ENCODE measurements at regions of chr11 and their contacts with region 1.

Region 1: DNA sequence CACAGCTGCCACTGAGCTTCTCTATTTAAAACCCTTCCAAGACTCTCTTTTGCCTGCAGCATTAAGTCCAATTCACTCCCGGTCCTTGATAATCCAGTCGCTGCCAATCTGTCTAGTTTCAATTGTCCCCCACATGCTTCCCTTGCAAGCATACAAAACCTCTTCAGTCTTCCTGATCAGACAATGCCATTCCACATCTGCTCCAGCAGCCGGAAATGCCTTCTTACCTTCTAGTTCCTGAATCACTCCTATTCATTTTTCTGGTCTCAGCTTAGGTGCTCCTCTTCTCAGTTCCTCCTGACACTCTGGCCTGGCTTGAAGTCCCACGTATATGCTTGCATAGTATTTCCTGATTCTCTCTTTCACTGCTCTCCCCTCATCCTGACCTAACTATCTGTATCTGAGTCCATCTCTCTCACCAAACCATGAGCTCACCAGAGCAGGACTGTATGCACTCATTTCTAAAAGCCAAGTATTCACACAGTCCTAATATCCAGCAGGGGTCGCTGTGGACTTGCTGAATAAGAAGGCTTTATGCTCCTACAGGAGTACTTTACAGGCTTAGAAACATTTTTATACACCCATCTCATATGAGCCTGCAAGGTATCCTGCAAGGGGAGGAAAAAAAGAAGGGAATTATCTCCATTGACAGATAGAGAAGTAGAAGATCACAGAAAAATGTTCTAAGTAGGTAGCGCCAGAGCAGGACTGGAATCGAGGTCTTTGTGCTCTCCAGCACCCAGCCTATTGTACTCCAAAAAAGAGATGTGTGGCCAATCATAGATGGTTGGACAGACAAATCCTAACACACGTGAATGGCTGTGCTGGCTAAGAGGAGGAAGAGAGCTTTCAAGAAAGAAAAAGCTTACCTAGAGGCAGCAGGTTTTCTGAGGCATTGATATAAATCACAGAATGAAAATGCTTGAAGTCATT is 19.2 kb downstream of the XRRA1 start:
- DNase-seq: peak; percentile 54
- CTCF ChIP-seq: peak; percentile 90

Region 2: DNA sequence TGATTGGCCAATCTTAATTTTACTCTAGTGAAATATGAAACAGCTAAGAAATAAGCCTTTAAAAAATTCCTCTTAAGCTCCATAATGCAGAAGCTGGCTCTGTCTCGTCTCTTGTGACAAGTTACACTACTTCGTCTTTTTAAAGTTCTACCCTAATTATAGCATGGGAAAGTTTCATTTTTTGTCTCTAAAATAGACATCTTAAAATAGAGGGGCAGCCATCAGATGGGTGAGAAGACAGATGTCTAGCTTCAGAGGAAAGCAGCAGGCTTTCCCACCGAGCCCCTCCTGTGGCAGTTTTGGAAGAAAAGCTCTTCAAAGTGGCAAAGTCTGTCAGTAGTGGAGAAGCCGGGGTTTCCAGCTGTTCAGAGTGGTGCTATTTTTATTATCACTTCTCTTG is 20.3 kb before region 1 on chr11:
- CTCF ChIA-PET with region 1: interaction called, 18 read pairs
- POLR2A ChIA-PET with region 1: no interaction called
- DNase-seq: peak; percentile 25
- CTCF ChIP-seq: no peak

Region 3: DNA sequence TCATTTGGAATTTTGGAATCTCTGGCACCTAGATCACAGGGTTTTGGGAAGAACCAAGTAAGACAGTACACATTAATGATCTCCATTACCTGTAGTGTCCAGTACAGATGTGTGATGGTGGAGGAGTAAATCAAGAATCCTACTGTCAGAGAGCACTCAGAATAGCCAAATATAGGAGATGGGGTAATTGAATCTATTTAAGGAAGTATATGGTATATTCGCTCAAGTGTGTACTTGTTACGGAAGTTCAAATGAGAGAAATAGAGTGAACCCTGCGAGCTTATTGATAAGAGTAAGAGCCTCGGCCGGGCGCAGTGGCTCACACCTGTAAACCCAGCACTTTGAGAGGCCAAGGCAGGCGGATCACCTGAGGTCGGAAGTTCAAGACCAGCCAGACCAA is 21.5 kb after region 1 on chr11:
- CTCF ChIA-PET with region 1: interaction called, 15 read pairs
- POLR2A ChIA-PET with region 1: no interaction called
- DNase-seq: no peak
- CTCF ChIP-seq: no peak